PC-3 (cell line): ENCODE measurements at regions of chr15 and their contacts with region 1.

Region 1: GRCh38 chr15:65304389-65305144 is at the start of gene RNU5B-1:
- DNase-seq: peak; percentile 91
- ATAC-seq: peak; percentile 79
- H3K4me3 ChIP-seq: peak within 1 kb of the TSS; percentile 70
- H3K27ac ChIP-seq: peak within 1 kb of the TSS; percentile 87
- H3K4me1 ChIP-seq: no peaks in the 10 kb centered on the region; the same call in 1 of the 2 replicates
- H3K27me3 ChIP-seq: no peaks in the 10 kb centered on the region
- CTCF ChIP-seq: no peak; the same call in 1 of the 2 replicates
- total RNA-seq, gene RNU5B-1: not detected in 2 replicates

Region 2: GRCh38 chr15:65184868-65185738 is 119.5 kb before region 1 on chr15 and contains the start of gene CLPX:
- CTCF ChIA-PET with region 1: no interaction called
- POLR2A ChIA-PET with region 1: interaction called, 17 read pairs
- intact Hi-C with region 1: loop called (anchors 2 kb)
- DNase-seq: peak; percentile 80
- ATAC-seq: peak; percentile 79
- H3K4me3 ChIP-seq: peak within 1 kb of the TSS; percentile 85
- H3K27ac ChIP-seq: peak within 1 kb of the TSS; percentile 41
- H3K4me1 ChIP-seq: peaks cover 10% of the 10 kb centered on the region
- H3K27me3 ChIP-seq: no peaks in the 10 kb centered on the region
- CTCF ChIP-seq: no peak
- total RNA-seq, gene CLPX: 19.3 and 22.5 TPM in 2 replicates

Region 3: DNA sequence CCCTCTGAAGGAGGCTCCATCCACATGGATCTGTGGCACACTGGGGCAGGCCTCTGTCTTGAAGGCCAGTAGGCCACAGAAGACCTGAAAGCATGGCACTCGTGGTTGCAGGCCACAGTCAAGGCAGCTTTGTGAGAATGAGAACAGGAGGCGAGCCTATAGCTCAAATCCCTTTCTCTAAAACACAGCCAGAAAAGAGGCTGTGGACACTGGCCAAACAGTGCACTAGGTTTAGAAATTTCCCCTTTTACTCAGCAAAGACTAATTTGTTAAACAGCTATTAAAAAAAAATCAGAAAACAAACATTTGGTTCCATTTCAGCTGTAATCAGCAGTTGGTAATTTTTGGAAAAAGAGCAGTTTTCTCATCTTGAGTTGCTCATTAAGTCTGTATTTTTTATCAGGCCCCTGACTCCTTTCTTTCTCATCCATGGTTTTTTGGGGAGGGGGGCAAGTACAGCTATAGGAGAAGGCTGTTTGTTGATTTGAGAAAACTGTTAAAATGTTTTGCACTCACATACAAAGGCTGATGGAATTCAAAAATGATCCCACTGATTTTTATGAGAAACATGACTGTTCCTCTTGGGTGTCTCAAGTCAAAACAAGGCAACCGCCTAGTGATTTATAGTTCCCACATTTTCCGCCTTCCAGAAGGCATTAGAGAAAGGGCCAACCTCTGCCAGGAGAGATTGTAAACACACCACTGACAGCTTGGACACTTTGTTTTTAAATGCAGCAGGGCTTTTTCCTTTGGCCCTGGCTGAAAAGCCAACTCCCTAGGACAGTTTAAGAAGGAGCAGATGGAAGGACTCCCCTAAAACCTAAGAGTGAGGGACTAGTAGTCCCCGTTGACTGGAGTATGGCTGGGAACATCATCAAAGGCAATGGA is 45.9 kb before region 1 on chr15:
- CTCF ChIA-PET with region 1: no interaction called
- POLR2A ChIA-PET with region 1: no interaction called
- intact Hi-C with region 1: no loop called
- DNase-seq: no peak
- ATAC-seq: no peak
- H3K4me3 ChIP-seq: no peak overlapping the region
- H3K27ac ChIP-seq: no peak overlapping the region
- H3K4me1 ChIP-seq: no peaks in the 10 kb centered on the region
- H3K27me3 ChIP-seq: no peaks in the 10 kb centered on the region
- CTCF ChIP-seq: no peak

Region 4: GRCh38 chr15:65292938-65293518 is 11.5 kb before region 1 on chr15:
- CTCF ChIA-PET with region 1: no interaction called
- POLR2A ChIA-PET with region 1: interaction called, 3 read pairs
- intact Hi-C with region 1: loop called (anchors 1 kb)
- DNase-seq: no peak
- ATAC-seq: no peak
- H3K4me3 ChIP-seq: no peak overlapping the region
- H3K27ac ChIP-seq: no peak overlapping the region
- H3K4me1 ChIP-seq: no peaks in the 10 kb centered on the region; the same call in 1 of the 2 replicates
- H3K27me3 ChIP-seq: no peaks in the 10 kb centered on the region
- CTCF ChIP-seq: no peak

Region 5: GRCh38 chr15:65384895-65385858 is 80.6 kb after region 1 on chr15:
- CTCF ChIA-PET with region 1: no interaction called
- POLR2A ChIA-PET with region 1: interaction called, 15 read pairs
- intact Hi-C with region 1: no loop called
- DNase-seq: peak; percentile 85
- ATAC-seq: peak; percentile 88
- H3K4me3 ChIP-seq: peak overlapping the region; percentile 38; the same call in 1 of the 2 replicates
- H3K27ac ChIP-seq: no peak overlapping the region
- H3K4me1 ChIP-seq: peaks cover 6% of the 10 kb centered on the region; the same call in 1 of the 2 replicates
- H3K27me3 ChIP-seq: no peaks in the 10 kb centered on the region
- CTCF ChIP-seq: peak; percentile 82

Region 6: DNA sequence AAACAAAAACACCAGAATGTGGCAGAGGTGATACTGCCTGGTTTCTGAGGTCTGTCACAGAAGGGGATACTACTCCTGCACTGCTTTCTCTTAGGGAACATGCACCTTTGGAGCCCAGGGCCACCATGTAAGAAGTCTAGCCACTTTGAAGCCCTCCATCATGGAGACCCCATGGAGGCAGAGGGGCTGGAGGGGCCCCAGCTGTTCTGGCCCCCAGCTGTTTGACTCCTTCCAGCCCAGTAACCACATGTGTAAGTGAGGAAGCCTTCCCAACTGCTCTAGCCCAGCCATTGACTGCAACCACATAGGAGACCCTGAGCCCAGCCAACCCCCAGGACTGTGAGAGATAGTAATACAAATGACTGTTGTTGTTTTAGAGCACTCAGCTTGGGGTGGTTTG is 127.2 kb after region 1 on chr15:
- CTCF ChIA-PET with region 1: interaction called, 11 read pairs
- POLR2A ChIA-PET with region 1: no interaction called
- intact Hi-C with region 1: no loop called
- DNase-seq: no peak
- ATAC-seq: no peak
- H3K4me3 ChIP-seq: no peak overlapping the region
- H3K27ac ChIP-seq: no peak overlapping the region
- H3K4me1 ChIP-seq: 0 out of 2 replicates have a peak, but pooled peaks cover 5% of the 10 kb centered on the region
- H3K27me3 ChIP-seq: no peaks in the 10 kb centered on the region
- CTCF ChIP-seq: no peak